ENCODE measurements at regions of chr20 and their contacts with region 1.

Region 1: GRCh38 chr20:19889011-19889953 is 127.9 kb upstream of the NAA20 start:
- DNase-seq: no peak
- H3K4me3 ChIP-seq: no peak overlapping the region
- H3K4me3 Mint-ChIP-seq: no peak overlapping the region
- H3K27ac Mint-ChIP-seq: peak overlapping the region; percentile 40
- H3K4me1 ChIP-seq: peaks cover 47% of the 10 kb centered on the region
- H3K4me1 Mint-ChIP-seq: peaks cover 36% of the 10 kb centered on the region
- H3K27me3 ChIP-seq: no peaks in the 10 kb centered on the region
- H3K27me3 Mint-ChIP-seq: no peaks in the 10 kb centered on the region
- CTCF ChIP-seq: no peak

Region 2: GRCh38 chr20:19692685-19693119 is 196.6 kb before region 1 on chr20:
- CTCF ChIA-PET with region 1: no interaction called
- POLR2A ChIA-PET with region 1: interaction called, 3 read pairs
- intact Hi-C with region 1: loop called (anchors 5 kb)
- DNase-seq: peak; percentile 55 to 73
- H3K4me3 ChIP-seq: no peak overlapping the region
- H3K4me3 Mint-ChIP-seq: peak overlapping the region; percentile 27
- H3K27ac Mint-ChIP-seq: no peak overlapping the region
- H3K4me1 ChIP-seq: 0 out of 2 replicates have a peak, but pooled peaks cover 8% of the 10 kb centered on the region
- H3K4me1 Mint-ChIP-seq: peaks cover 15% of the 10 kb centered on the region
- H3K27me3 ChIP-seq: no peaks in the 10 kb centered on the region
- H3K27me3 Mint-ChIP-seq: no peaks in the 10 kb centered on the region
- CTCF ChIP-seq: peak; percentile 90

Region 3: DNA sequence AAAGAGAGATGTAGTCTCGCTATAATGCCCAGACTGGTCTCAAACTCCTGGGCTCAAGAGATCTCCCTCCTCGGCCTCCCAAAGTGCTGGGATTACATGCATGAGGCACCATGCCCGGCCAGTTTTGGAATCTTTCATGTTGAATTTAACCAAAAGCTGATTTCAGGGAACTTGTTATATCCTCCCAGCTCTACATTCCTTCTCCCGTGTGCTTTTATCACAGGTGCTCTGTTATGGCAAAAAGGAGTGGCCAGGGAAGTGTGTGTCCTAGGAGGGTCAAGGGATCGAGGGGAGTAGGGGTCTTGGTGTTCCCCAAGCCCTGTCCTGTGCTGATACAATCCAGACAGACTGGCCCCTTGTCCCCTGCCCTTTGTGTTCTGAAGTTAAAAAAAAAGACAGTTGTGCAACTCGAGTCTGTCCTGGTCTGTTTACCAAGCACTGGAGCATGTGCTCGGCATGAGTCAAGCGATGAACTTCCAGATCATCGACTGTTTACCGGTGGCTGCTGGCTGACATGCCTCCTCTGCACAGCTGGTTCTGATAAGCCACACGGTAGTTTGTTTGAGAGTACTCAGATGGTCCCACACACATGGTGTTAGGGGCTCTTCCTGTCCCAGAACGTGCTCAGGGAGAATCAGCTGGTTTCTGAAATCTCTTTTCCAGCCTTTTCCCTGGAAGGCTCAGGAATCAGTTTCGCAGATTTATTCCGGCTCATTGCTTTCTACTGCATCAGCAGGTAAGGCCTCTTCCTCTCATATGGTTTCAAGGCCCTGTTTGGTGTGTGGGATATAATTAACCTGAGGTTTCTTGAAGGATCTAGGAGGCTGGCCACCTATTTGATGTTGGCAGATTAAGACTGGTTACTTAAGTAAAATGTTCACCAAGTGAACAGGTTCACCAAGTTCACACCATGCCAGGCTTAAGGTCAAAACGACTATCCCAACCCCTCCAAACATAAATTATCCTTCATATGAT is 75.3 kb after region 1 on chr20:
- CTCF ChIA-PET with region 1: no interaction called
- POLR2A ChIA-PET with region 1: no interaction called
- intact Hi-C with region 1: loop called (anchors 1 kb)
- DNase-seq: peak; percentile 82 to 88
- H3K4me3 ChIP-seq: no peak overlapping the region
- H3K4me3 Mint-ChIP-seq: peak overlapping the region; percentile 57
- H3K27ac Mint-ChIP-seq: peak overlapping the region; percentile 88
- H3K4me1 ChIP-seq: peaks cover 37% of the 10 kb centered on the region
- H3K4me1 Mint-ChIP-seq: peaks cover 32% of the 10 kb centered on the region
- H3K27me3 ChIP-seq: no peaks in the 10 kb centered on the region
- H3K27me3 Mint-ChIP-seq: no peaks in the 10 kb centered on the region
- CTCF ChIP-seq: no peak

Measured in Caco-2 (cell line).